Endothelial cell of umbilical vein (primary cell): ENCODE measurements at regions of chr1 and their contacts with region 1.

Region 1: GRCh38 chr1:157992031-157992832 is 1.2 kb upstream of the KIRREL1 start:
- DNase-seq: peak; percentile 73
- H3K4me3 ChIP-seq: no peak overlapping the region
- H3K27ac ChIP-seq: no peak overlapping the region
- H3K4me1 ChIP-seq: peaks cover 19% of the 10 kb centered on the region
- H3K27me3 ChIP-seq: peaks cover 14 to 21% of the 10 kb centered on the region in 2 experiments
- CTCF ChIP-seq: peak; percentile 93 to 94
- POLR2A ChIP-seq: no peak

Region 2: GRCh38 chr1:156970017-156970416 is 1022.2 kb before region 1 on chr1:
- CTCF ChIA-PET with region 1: no interaction called
- POLR2A ChIA-PET with region 1: no interaction called
- dilution Hi-C with region 1: no loop called
- intact Hi-C with region 1: no loop called
- DNase-seq: no peak
- H3K4me3 ChIP-seq: no peak overlapping the region
- H3K27ac ChIP-seq: no peak overlapping the region
- H3K4me1 ChIP-seq: no peaks in the 10 kb centered on the region
- H3K27me3 ChIP-seq: no peaks in the 10 kb centered on the region
- CTCF ChIP-seq: no peak
- POLR2A ChIP-seq: no peak

Region 3: DNA sequence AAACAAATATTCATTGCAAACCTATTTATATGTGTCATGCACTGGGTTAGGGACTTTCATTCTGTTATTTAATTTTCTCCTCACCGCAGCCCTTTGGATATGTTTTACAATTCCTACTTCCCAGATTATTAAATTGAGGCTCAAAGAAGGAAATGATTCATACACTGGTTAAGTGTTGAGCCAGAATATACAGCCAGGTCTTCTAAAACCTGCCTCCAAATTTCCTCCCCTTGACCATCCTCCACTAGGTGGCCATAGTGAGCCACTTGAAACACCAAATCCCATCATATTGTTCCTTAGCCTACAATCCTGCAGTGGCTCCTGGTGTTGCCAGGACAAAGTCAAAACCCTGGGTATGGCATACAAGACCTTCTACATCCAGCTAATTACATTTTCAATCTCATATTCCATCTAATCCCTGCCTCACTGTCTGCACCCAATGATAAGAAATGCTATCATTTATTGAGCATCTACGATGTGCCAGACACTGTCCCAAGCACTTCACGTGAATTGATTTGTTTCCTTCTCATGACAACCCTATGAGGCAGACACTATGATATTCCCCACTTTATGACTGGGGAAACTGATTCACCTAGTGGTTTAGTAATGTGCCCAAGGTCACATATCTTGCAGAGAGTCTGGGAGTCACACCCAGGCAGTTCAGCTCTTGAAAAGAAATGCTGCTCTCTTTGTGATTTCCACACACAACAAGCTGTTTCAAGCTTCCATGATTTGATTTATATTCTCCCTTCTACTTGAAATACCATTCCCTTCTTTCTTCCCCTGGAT is 22.3 kb before region 1 on chr1:
- CTCF ChIA-PET with region 1: interaction called, 74 read pairs
- POLR2A ChIA-PET with region 1: interaction called, 3 read pairs
- dilution Hi-C with region 1: no loop called
- intact Hi-C with region 1: loop called (anchors 1 kb)
- DNase-seq: peak; percentile 90
- H3K4me3 ChIP-seq: no peak overlapping the region
- H3K27ac ChIP-seq: peak overlapping the region; percentile 10
- H3K4me1 ChIP-seq: peaks cover 17% of the 10 kb centered on the region
- H3K27me3 ChIP-seq: peaks cover 2 to 4% of the 10 kb centered on the region in 2 experiments
- CTCF ChIP-seq: peak; percentile 75 to 90
- POLR2A ChIP-seq: no peak

Region 4: DNA sequence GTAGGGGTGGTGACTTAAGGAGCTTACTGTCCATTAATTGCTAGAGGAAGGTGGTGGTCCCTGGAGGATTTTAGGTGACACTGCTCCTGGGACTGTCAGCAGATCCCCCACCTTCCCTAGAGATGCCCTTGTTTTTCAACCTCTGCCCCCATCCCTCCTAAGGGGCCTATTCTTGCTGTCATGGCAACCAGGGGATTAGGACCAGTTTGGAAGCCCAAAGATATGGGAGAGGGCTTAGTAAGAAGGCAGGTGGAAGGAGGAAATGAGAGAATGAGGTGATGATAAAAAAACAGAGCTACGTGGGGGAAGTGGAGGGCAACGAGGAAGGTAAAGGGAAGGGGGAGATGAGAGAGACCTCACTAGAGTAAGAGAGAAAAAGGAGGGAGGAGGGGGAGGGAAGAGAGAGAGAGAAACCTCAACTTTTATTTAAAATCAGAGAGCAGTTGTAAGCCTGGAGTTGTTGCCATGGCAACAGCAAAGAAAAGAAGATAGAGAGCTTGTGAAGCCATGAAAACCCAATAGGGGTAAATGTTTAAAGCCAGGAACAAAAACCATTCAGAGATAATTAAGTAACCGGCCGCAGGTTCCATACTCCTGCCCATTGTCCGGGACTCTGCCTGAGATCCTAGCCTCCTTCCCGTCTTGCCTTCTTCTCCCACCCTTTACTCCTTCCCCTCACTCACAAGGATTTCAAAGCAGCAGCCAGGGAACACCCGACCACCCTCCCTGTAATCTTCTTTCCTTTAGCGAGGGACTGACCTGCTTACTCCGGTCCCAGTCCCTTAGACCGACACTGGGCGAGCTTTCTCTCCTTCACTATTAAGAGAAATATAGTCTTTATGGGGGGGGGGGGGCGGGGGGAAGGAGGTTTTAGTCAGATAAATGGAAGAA is 21.9 kb after region 1 on chr1:
- CTCF ChIA-PET with region 1: interaction called, 72 read pairs
- POLR2A ChIA-PET with region 1: interaction called, 3 read pairs
- dilution Hi-C with region 1: no loop called
- intact Hi-C with region 1: loop called (anchors 1 kb)
- DNase-seq: no peak
- H3K4me3 ChIP-seq: no peak overlapping the region
- H3K27ac ChIP-seq: no peak overlapping the region
- H3K4me1 ChIP-seq: peaks cover 60% of the 10 kb centered on the region
- H3K27me3 ChIP-seq: no peaks in the 10 kb centered on the region
- CTCF ChIP-seq: no peak
- POLR2A ChIP-seq: no peak

Region 5: GRCh38 chr1:158043232-158043631 is 51.0 kb after region 1 on chr1:
- CTCF ChIA-PET with region 1: interaction called, 264 read pairs
- POLR2A ChIA-PET with region 1: interaction called, 3 read pairs
- dilution Hi-C with region 1: no loop called
- intact Hi-C with region 1: no loop called
- DNase-seq: no peak
- H3K4me3 ChIP-seq: no peak overlapping the region
- H3K27ac ChIP-seq: no peak overlapping the region
- H3K4me1 ChIP-seq: peaks cover 19% of the 10 kb centered on the region
- H3K27me3 ChIP-seq: no peaks in the 10 kb centered on the region
- CTCF ChIP-seq: no peak
- POLR2A ChIP-seq: no peak

Region 6: DNA sequence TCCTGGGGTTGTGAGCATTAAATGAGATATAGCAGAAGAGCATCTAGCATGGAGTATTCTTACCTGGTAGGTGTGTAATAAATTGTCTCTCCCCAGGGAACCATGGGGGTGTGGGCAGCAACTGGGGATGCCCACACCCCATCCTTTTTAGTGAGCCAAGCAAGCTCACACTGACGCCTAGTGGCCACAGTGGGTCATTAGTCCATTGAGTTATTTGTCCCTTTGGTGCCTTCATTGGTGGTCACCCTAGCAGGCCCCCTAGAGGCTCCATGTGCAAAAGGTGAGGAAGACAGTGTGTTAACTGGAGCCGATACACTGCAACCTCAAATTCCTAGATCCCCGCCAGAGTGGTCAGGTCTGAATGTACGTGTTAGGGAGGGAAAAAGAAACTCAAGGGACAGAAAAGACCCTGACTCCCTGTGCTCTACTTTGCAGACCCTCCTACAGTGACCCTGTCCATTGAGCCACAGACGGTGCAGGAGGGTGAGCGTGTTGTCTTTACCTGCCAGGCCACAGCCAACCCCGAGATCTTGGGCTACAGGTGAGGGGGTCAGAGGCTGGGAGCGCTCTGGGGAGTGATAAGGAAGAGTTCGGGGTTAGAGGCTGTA is 95.2 kb after region 1 on chr1:
- CTCF ChIA-PET with region 1: interaction called, 236 read pairs
- POLR2A ChIA-PET with region 1: no interaction called
- dilution Hi-C with region 1: no loop called
- intact Hi-C with region 1: loop called (anchors 1 kb)
- DNase-seq: peak; percentile 83
- H3K4me3 ChIP-seq: no peak overlapping the region
- H3K27ac ChIP-seq: no peak overlapping the region
- H3K4me1 ChIP-seq: no peaks in the 10 kb centered on the region
- H3K27me3 ChIP-seq: no peaks in the 10 kb centered on the region
- CTCF ChIP-seq: peak; percentile 96 to 99
- POLR2A ChIP-seq: no peak

Region 7: GRCh38 chr1:158107916-158108315 is 115.7 kb after region 1 on chr1:
- CTCF ChIA-PET with region 1: interaction called, 460 read pairs
- POLR2A ChIA-PET with region 1: no interaction called
- dilution Hi-C with region 1: no loop called
- intact Hi-C with region 1: loop called (anchors 1 kb)
- DNase-seq: no peak
- H3K4me3 ChIP-seq: no peak overlapping the region
- H3K27ac ChIP-seq: no peak overlapping the region
- H3K4me1 ChIP-seq: peaks cover under 1% of the 10 kb centered on the region
- H3K27me3 ChIP-seq: peaks cover 35 to 39% of the 10 kb centered on the region in 2 experiments
- CTCF ChIP-seq: no peak
- POLR2A ChIP-seq: no peak

Region 8: GRCh38 chr1:158145173-158145719 is 153.0 kb after region 1 on chr1:
- CTCF ChIA-PET with region 1: no interaction called
- POLR2A ChIA-PET with region 1: no interaction called
- dilution Hi-C with region 1: no loop called
- intact Hi-C with region 1: no loop called
- DNase-seq: peak; percentile 17
- H3K4me3 ChIP-seq: no peak overlapping the region
- H3K27ac ChIP-seq: no peak overlapping the region
- H3K4me1 ChIP-seq: peaks cover 14% of the 10 kb centered on the region
- H3K27me3 ChIP-seq: peaks cover 0 to 2% of the 10 kb centered on the region in 2 experiments
- CTCF ChIP-seq: no peak
- POLR2A ChIP-seq: no peak